ENCODE measurements at regions of chr6 and their contacts with region 1.

Region 1: DNA sequence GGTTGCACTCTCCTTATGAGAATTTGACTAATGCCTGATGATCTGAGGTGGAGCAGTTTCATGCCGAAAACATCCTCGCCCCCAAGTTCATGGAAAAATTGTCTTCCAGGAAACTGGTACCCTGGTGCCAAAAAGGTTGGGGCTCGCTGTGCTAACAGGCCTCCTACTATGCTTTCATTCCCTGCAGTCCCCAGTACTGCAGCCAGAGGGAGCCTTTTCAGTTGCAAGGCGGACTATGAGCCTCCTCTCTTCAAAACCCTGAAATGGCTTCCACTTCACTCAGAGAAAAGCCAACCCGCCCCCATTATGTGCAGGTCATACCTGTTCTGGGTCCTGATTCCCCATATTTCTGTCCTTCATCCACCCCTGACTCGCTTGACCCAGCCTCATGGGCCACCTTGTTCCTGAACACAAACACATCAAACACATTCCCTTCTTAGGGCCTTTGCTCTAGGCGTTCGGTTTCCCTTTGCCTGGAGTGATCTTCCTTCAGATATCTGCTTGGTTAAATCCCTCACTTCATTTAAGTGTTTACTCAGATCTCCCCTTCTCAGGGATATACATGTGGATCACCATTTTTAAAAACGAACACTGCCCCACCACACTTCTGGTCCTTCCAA is 173.7 kb downstream of the PHACTR1 start:
- DNase-seq: no peak
- H3K4me3 ChIP-seq: no peak overlapping the region; a peak in 1 of 4 replicates
- H3K27ac ChIP-seq: no peak overlapping the region
- H3K4me1 ChIP-seq: peaks cover 0 to 12% of the 10 kb centered on the region in 2 experiments; a peak in 2 of 4 replicates
- H3K27me3 ChIP-seq: no peaks in the 10 kb centered on the region
- CTCF ChIP-seq: peak; percentile 59
- EP300 ChIP-seq: no peak
- RAD21 ChIP-seq: no peak

Region 2: DNA sequence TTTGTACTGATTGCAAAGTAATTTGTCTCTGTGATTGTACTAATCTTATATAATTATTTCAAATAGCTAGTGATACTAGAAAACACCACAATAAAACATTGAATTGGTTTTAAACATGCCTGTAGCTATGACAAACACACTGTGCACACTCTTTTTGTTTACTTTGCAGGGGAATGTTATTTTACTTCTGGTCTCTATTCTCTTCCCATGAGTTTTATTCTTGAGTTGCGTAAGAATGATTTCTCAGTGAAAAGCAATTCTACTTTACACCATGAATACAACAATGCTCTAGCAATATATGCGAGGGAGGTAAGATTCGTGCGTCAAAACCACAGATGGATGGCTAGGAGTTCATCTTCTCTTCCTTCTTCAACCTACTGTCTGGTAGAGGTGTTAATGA is 242.1 kb before region 1 on chr6:
- CTCF ChIA-PET with region 1: interaction called, 11 read pairs
- POLR2A ChIA-PET with region 1: no interaction called
- DNase-seq: no peak
- H3K4me3 ChIP-seq: no peak overlapping the region
- H3K27ac ChIP-seq: no peak overlapping the region
- H3K4me1 ChIP-seq: no peaks in the 10 kb centered on the region
- H3K27me3 ChIP-seq: no peaks in the 10 kb centered on the region
- CTCF ChIP-seq: no peak
- EP300 ChIP-seq: no peak
- RAD21 ChIP-seq: no peak

Region 3: GRCh38 chr6:12903246-12903645 is 13.0 kb after region 1 on chr6:
- CTCF ChIA-PET with region 1: interaction called, 11 read pairs
- POLR2A ChIA-PET with region 1: no interaction called
- DNase-seq: no peak
- H3K4me3 ChIP-seq: no peak overlapping the region
- H3K27ac ChIP-seq: no peak overlapping the region
- H3K4me1 ChIP-seq: no peaks in the 10 kb centered on the region
- H3K27me3 ChIP-seq: no peaks in the 10 kb centered on the region
- CTCF ChIP-seq: no peak
- EP300 ChIP-seq: no peak
- RAD21 ChIP-seq: no peak

Region 4: GRCh38 chr6:13068586-13069210 is 178.4 kb after region 1 on chr6:
- CTCF ChIA-PET with region 1: no interaction called
- POLR2A ChIA-PET with region 1: no interaction called
- DNase-seq: no peak
- H3K4me3 ChIP-seq: no peak overlapping the region
- H3K27ac ChIP-seq: peak overlapping the region in 1 of 2 experiments; percentile 65; a peak in 2 of 4 replicates
- H3K4me1 ChIP-seq: peaks cover 0 to 11% of the 10 kb centered on the region in 2 experiments; a peak in 2 of 4 replicates
- H3K27me3 ChIP-seq: no peaks in the 10 kb centered on the region
- CTCF ChIP-seq: no peak
- EP300 ChIP-seq: no peak
- RAD21 ChIP-seq: no peak

Measured in SK-N-SH (cell line).